ENCODE measurements at regions of chr9 and their contacts with region 1.

Region 1: DNA sequence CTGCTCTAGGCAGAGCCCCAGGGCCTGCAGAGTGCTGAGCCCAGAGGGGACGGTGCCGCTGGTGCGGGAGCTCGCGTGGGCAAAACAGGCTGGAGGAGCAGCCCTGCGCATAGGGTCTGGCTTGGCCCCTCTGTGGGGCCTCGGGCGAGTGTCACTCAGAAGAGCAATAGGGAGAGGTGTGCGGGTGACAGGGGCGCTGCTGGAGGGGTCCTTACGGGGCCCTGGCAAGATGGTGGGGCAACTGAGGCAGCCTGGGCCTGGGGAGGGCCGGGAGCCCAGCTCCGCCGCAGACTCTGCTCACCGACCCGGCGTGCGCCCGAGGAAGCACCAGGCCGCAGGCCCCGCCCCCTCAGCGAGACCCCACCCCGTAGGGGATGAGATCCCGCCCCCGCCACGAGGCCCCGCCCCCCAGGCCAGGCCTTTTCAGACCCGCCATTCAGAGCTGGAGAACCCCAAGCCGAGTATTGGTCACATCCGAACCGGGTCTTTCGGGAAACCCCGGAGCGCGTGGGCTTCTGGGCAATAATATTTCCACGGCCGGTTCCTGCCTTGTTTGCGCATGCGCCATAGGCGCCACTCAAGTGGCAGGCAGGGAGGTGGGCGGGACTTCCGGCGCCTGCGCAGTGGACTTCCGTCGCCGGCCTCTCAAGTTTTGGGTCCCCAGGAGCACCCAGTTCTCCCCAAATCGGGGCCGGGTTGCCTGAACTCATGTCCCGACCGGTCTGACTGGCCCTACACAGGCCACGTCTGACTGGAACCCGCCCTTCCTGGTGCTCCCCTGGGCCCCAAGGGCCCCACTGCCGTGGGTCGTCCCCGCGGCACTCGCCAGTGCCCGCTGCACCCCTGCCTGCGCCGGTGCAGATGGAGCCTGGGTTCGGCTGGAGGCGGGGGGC is 1.3 kb upstream of the RNF208 start:
- DNase-seq: peak; percentile 94 to 99
- H3K4me3 ChIP-seq: peak overlapping the region; percentile 75 to 89
- H3K27ac ChIP-seq: peak overlapping the region; percentile 94 to 95
- H3K4me1 ChIP-seq: peaks cover 5 to 19% of the 10 kb centered on the region in 2 donors
- H3K27me3 ChIP-seq: no peaks in the 10 kb centered on the region
- CTCF ChIP-seq: no peak

Region 2: DNA sequence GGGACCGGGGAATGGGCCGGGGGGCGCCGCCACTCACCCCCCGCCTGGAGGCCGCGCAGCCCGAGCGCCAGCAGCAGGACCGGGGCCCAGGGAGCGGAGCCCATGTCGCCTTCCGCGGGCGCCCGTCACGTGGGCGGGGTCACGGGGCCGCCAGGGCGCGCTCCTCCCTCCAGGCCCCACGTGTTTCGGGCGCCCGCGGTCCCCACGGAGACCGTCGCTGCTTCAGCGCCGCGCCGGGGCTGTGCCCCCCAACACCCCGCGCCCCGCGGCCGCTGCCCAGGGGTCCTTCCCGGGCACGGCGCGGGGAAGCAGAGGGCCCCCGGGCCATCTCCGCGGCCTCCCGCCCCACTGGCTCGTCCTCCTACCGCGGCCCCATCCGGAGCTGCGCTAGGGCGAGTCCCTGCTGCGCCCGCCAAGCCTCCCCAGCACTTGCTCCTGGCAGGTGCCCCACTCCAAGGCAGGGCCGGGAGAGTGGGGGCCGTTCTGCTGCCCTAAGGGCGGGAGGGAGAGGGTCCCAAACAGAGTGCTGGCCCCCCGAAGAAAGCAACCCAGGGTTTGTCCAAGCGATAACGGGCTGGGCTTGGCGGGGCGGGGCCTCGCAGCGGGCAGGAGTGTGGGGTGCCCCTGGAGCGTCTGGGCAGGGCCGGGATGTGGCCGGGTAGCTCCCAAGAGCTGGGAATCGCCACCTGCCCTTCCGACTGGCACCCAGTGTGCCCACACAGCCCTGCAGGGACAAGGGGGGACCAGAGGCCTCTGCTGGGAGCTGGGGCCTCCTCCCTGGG is 108.5 kb before region 1 on chr9 and contains the start of gene DPP7:
- intact Hi-C with region 1: loop called (anchors 2 kb)
- DNase-seq: peak in 1 of 2 donors; percentile 80
- H3K4me3 ChIP-seq: peak within 1 kb of the TSS; percentile 89 to 93
- H3K27ac ChIP-seq: no peak within 1 kb of the TSS
- H3K4me1 ChIP-seq: peaks cover 0 to 15% of the 10 kb centered on the region in 2 donors
- H3K27me3 ChIP-seq: no peaks in the 10 kb centered on the region
- CTCF ChIP-seq: no peak
- total RNA-seq, gene DPP7: 176 TPM

Region 3: GRCh38 chr9:137129456-137130175 is 93.7 kb before region 1 on chr9:
- intact Hi-C with region 1: loop called (anchors 1 kb)
- DNase-seq: peak; percentile 34 to 89
- H3K4me3 ChIP-seq: peak overlapping the region; percentile 73 to 81
- H3K27ac ChIP-seq: peak overlapping the region; percentile 54 to 70
- H3K4me1 ChIP-seq: peaks cover 7 to 12% of the 10 kb centered on the region in 2 donors
- H3K27me3 ChIP-seq: no peaks in the 10 kb centered on the region
- CTCF ChIP-seq: no peak

Region 4: DNA sequence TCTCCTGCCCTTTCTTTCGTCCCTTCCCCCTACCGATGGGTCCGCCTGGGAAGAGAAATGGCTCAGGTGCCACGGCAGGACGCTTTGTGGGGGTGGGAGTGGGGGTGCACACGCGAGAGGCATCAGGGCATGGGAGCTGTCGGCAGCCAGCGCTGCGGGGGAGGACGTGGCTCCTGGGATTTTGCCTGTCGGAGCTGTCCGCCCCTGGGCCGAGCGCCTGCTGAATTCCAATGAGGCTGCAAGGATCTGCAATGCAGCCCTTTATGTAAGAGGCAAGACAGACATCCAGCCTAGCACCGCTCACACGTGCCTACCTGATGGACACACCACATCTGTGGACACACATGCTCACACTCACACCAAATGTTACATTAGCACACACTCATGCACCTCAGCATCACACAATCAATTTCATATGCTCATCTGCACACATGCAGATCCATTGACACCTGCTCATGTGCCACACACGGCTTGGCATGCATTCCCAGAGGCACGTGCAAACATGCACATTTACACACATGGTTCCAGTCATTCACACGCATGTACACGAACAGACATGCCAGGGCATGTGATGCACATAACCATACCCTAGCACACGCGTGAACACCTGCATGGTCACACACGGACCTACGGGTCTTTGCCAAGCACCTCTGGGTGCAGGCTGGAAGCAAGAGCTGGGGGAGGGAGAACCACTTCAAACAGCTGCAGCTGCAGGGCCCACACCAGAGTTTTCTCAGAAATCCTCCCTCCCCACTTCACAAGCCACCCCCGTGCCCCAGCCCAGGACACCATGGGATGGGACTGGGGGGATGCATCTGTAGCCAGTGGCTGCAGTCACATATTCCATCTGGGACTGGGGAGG is 82.9 kb before region 1 on chr9:
- intact Hi-C with region 1: no loop called
- DNase-seq: no peak
- H3K4me3 ChIP-seq: no peak overlapping the region
- H3K27ac ChIP-seq: no peak overlapping the region
- H3K4me1 ChIP-seq: no peaks in the 10 kb centered on the region
- H3K27me3 ChIP-seq: peaks cover 17% of the 10 kb centered on the region
- CTCF ChIP-seq: no peak

Region 5: DNA sequence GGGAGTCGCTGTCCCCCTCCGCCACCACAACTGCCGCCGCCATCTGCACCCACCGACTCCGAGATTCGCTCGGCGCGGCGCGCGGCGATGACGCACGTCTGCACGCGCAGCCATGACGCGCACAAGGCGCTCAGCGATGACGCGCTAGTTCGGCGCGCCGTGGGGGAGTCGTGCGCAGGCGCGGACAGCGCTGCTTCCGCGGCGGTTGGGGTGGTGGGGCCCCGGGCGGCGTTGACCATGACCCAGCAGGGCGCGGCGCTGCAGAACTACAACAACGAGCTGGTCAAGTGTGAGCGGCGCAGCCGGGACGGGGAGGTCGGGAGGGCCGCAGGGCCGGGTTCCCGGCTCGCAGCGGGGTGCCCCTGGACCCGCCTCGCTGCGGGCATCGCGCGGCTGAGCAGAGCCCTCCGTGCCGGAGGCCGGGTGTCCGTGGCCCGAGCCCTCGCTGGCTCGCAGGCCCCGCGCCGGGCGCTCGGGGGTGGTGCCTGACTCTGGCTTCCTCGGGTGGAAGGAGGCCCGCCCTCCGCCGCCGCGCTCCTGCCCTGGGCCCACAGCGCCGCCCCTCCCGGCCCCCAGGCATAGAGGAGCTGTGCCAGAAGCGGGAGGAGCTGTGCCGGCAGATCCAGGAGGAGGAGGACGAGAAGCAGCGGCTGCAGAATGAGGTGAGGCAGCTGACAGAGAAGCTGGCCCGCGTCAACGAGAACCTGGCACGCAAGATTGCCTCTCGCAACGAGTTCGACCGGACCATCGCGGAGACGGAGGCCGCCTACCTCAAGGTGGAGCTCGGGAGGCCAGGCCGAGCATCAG is 34.6 kb before region 1 on chr9 and contains the starts of genes ANAPC2 and SSNA1:
- intact Hi-C with region 1: loop called (anchors 1 kb)
- DNase-seq: peak; percentile 70 to 95
- H3K4me3 ChIP-seq: peak within 1 kb of the TSS; percentile 85 to 91
- H3K27ac ChIP-seq: peak within 1 kb of the TSS; percentile 86 to 89
- H3K4me1 ChIP-seq: peaks cover 23 to 38% of the 10 kb centered on the region in 2 donors
- H3K27me3 ChIP-seq: no peaks in the 10 kb centered on the region
- CTCF ChIP-seq: peak in 2 of 3 experiments; percentile 15 to 35
- total RNA-seq, gene ANAPC2: 24.1 TPM
- total RNA-seq, gene SSNA1: 123 TPM

Region 6: DNA sequence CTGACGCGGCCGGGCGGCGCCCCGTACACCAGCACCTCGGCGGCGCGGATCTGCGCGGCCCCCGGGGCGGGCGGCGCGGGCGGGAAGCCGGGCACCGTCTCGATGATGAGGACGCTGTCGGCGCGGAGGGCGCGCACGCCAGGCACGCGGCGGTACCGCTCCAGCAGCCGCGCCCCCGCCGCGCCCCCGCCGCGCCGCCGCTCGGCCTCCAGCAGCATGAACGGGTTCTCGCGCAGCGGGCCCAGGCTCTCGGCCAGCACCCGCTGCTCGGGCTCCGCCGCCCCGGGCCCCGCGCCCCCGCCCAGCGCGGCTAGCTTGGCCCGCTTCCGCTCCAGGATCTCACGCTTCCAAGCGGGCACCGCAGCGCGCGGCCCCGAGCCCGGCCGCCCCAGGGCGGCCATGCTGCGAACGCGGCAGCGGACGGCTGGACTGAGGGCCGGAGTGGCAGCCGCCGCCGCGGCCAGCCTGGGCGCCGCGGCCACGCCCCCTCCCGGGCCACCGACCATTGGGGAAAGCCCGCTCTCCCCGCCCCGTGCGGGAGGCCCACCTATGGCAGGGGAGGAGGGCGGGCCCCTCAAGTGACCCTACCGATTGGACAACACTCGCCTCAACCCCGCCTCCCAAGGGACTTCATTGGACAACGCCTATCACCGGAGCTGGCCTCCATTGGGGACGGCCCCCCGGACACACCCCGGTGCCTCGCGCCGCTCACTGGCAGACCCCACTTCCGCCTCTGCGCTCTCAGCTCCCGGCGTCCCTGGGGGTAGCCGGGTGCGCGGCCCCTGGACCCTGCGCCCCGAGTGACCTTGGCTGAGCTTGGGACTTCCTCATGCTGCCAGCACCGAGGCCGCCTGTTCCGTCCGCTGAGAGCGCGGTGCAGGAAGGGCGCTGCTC is 22.8 kb before region 1 on chr9 and contains the start of gene TPRN:
- intact Hi-C with region 1: loop called (anchors 1 kb)
- DNase-seq: peak; percentile 99 to 100
- H3K4me3 ChIP-seq: peak within 1 kb of the TSS; percentile 77 to 80
- H3K27ac ChIP-seq: peak within 1 kb of the TSS; percentile 73 to 75
- H3K4me1 ChIP-seq: peaks cover 20 to 45% of the 10 kb centered on the region in 2 donors
- H3K27me3 ChIP-seq: no peaks in the 10 kb centered on the region
- CTCF ChIP-seq: peak in 1 of 3 experiments; percentile 29
- total RNA-seq, gene TPRN: 2.8 TPM

Region 7: DNA sequence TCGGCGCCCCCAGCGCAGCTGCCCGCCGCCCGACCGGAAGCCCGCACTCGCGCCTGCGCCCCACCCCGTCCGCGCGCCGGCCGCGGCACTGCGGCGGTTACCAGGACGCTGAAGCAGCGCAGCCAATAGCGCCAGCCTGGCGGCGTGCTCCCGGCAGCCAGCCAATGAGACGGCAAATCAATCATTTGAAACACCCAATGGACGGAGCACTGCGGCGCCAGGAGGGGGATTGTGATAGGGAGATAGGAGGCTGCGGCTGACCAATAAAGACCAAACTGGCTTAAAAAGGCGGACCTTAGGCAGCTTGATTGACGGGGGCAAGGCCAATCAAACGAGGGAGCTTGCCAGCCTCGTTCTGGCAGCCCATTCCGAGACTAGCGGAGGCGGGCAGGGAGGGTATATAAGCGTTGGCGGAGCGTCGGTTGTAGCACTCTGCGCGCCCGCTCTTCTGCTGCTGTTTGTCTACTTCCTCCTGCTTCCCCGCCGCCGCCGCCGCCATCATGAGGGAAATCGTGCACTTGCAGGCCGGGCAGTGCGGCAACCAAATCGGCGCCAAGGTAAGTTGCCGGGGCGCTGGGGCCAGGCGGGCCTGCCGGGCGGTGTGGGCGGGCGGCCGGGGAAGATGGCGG is 17.7 kb after region 1 on chr9 and contains the start of gene TUBB4B:
- intact Hi-C with region 1: loop called (anchors 1 kb)
- DNase-seq: peak; percentile 99 to 100
- H3K4me3 ChIP-seq: peak within 1 kb of the TSS; percentile 81 to 93
- H3K27ac ChIP-seq: peak within 1 kb of the TSS; percentile 88 to 90
- H3K4me1 ChIP-seq: peaks cover 13 to 28% of the 10 kb centered on the region in 2 donors
- H3K27me3 ChIP-seq: no peaks in the 10 kb centered on the region
- CTCF ChIP-seq: peak in 1 of 3 experiments; percentile 33
- total RNA-seq, gene TUBB4B: 403 TPM